ENCODE measurements at regions of chr11 and their contacts with region 1.

Region 1: GRCh38 chr11:62309991-62310390 is 11.1 kb upstream of the SCGB1D4 start:
- DNase-seq: no peak

Region 2: GRCh38 chr11:62169935-62170548 is 139.9 kb before region 1 on chr11:
- intact Hi-C with region 1: loop called (anchors 5 kb)
- DNase-seq: no peak

Region 3: GRCh38 chr11:62514151-62514550 is 204.2 kb after region 1 on chr11:
- intact Hi-C with region 1: no loop called
- DNase-seq: no peak

Measured in head of caudate nucleus (tissue), 42 donors.